Activated B cell treated with CpG ODN at 0.5 μM for 24 hours (primary cell): ENCODE measurements at regions of chr11 and their contacts with region 1.

Region 1: DNA sequence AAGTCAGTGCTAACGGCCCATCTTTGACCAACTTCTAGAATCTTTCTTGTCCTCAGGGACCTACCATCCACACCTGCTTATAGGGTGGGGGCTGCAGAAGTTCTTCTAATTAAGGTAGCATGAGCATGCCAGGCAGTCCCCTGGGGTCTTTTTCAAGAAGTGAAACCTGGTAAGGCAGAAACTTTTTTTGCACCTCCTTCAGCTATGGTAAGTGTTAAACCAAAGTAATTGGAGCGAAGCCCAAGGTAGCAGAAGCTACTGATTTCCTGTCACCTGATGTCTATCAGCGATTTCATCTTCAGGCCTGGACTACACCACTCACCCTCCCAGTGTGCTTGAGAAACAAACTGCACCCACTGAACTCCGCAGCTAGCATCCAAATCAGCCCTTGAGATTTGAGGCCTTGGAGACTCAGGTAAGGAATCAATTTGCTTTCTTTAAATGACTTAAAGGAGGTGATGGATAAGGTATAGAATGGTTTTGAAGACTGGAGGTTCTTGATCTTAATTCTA is at the start of gene MS4A1:
- DNase-seq: peak; percentile 44
- ATAC-seq: peak; percentile 83
- H3K4me3 Mint-ChIP-seq: peak within 1 kb of the TSS; percentile 97
- H3K27ac Mint-ChIP-seq: peak within 1 kb of the TSS; percentile 97
- H3K4me1 Mint-ChIP-seq: peaks cover 54% of the 10 kb centered on the region
- H3K27me3 Mint-ChIP-seq: no peaks in the 10 kb centered on the region
- CTCF ChIP-seq: no peak
- total RNA-seq, gene MS4A1: 1,910 and 2,024 TPM in 2 replicates

Region 2: GRCh38 chr11:60363542-60364510 is 91.8 kb before region 1 on chr11:
- CTCF ChIA-PET with region 1: interaction called, 194 read pairs
- POLR2A ChIA-PET with region 1: interaction called, 800 read pairs
- intact Hi-C with region 1: loop called (anchors 1 kb)
- DNase-seq: peak; percentile 42
- ATAC-seq: peak; percentile 81
- H3K4me3 Mint-ChIP-seq: peak overlapping the region; percentile 83
- H3K27ac Mint-ChIP-seq: peak overlapping the region; percentile 93
- H3K4me1 Mint-ChIP-seq: peaks cover 80% of the 10 kb centered on the region
- H3K27me3 Mint-ChIP-seq: no peaks in the 10 kb centered on the region
- CTCF ChIP-seq: no peak

Region 3: GRCh38 chr11:60396799-60397198 is 58.8 kb before region 1 on chr11:
- CTCF ChIA-PET with region 1: interaction called, 12 read pairs
- POLR2A ChIA-PET with region 1: interaction called, 156 read pairs
- intact Hi-C with region 1: loop called (anchors 1 kb)
- DNase-seq: no peak
- ATAC-seq: peak; percentile 92
- H3K4me3 Mint-ChIP-seq: peak overlapping the region; percentile 71
- H3K27ac Mint-ChIP-seq: peak overlapping the region; percentile 95
- H3K4me1 Mint-ChIP-seq: peaks cover 69% of the 10 kb centered on the region
- H3K27me3 Mint-ChIP-seq: no peaks in the 10 kb centered on the region
- CTCF ChIP-seq: no peak

Region 4: GRCh38 chr11:60477035-60477445 is 21.5 kb after region 1 on chr11:
- CTCF ChIA-PET with region 1: interaction called, 16 read pairs
- POLR2A ChIA-PET with region 1: interaction called, 251 read pairs
- intact Hi-C with region 1: loop called (anchors 1 kb)
- DNase-seq: no peak
- ATAC-seq: peak; percentile 95
- H3K4me3 Mint-ChIP-seq: peak overlapping the region; percentile 64
- H3K27ac Mint-ChIP-seq: peak overlapping the region; percentile 91
- H3K4me1 Mint-ChIP-seq: peaks cover 65% of the 10 kb centered on the region
- H3K27me3 Mint-ChIP-seq: no peaks in the 10 kb centered on the region
- CTCF ChIP-seq: no peak

Region 5: DNA sequence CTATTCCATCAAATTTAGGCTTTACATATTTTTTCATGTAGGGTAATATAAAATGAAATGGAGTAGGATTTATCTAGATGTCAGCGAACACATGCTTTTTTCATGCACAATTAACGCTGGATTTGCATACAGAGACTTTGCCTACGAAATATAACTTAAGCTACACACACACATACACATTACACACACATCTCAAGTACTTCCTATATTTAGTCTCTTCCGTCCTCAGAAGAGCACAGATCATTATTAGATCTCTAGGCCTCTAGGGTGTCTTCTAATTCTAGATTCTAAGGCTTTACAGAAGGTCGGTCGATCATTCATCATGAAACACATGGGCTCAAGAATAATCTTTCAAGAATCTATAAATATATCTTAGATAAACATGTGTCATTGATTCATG is 55.8 kb after region 1 on chr11:
- CTCF ChIA-PET with region 1: no interaction called
- POLR2A ChIA-PET with region 1: no interaction called
- intact Hi-C with region 1: no loop called
- DNase-seq: no peak
- ATAC-seq: no peak
- H3K4me3 Mint-ChIP-seq: no peak overlapping the region
- H3K27ac Mint-ChIP-seq: no peak overlapping the region
- H3K4me1 Mint-ChIP-seq: peaks cover 14% of the 10 kb centered on the region
- H3K27me3 Mint-ChIP-seq: peaks cover 2% of the 10 kb centered on the region
- CTCF ChIP-seq: no peak

Region 6: DNA sequence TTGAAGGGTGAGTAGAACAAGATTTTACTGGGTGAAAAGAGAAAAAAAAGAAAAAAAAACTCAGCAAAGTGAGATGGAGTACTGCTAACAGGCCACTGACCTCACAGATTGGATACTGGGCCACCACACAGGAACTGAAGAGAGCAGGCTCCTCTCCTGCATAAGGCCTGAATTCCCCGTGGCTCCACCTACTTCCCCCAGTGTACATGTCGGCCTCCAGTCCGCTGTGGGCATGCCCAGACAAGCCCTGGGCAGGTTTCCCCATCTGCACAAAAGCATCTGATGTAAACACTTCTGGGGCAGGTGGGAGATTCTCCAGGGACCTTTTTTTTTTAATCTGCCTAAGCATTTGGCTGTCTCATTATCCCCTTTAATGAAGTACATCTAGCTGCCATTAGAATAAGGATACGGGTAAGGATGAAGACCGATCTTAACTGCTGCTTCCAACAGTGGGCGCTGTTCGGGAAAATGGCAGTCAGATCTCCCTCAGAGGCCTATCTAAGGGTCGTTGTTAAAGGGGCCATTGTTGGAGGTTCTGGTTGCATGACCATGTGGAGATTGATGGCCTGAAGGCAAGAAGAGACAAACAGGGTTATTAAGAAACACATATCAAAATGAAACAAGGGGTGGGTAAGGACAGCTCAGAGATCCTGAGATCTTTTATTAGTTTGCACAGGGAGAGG is 108.1 kb after region 1 on chr11:
- CTCF ChIA-PET with region 1: no interaction called
- POLR2A ChIA-PET with region 1: no interaction called
- intact Hi-C with region 1: no loop called
- DNase-seq: no peak
- ATAC-seq: peak; percentile 75
- H3K4me3 Mint-ChIP-seq: no peak overlapping the region
- H3K27ac Mint-ChIP-seq: no peak overlapping the region
- H3K4me1 Mint-ChIP-seq: peaks cover 9% of the 10 kb centered on the region
- H3K27me3 Mint-ChIP-seq: peaks cover 3% of the 10 kb centered on the region
- CTCF ChIP-seq: no peak

Region 7: DNA sequence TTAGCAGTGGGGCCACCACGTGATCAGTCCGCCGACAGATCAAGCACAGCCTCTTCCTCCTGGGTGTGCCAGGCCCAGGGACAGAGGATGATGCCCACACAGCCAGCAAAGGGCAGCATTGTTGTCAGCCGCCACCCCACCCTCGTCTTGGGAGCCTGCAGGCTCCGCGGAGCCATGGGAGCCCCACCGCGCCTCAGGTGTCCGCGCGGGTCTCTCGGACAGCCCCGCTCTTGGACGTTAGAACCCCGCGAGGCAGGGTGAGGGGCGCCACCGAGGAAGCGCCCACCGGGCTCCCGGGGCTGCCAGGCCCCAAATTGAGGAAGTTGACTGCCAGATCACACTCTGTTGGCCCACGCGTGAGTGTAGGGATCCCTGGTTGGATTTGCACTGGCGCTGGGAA is 159.9 kb after region 1 on chr11:
- CTCF ChIA-PET with region 1: interaction called, 3 read pairs
- POLR2A ChIA-PET with region 1: interaction called, 7 read pairs
- intact Hi-C with region 1: loop called (anchors 1 kb)
- DNase-seq: no peak
- ATAC-seq: no peak
- H3K4me3 Mint-ChIP-seq: no peak overlapping the region
- H3K27ac Mint-ChIP-seq: no peak overlapping the region
- H3K4me1 Mint-ChIP-seq: peaks cover 10% of the 10 kb centered on the region
- H3K27me3 Mint-ChIP-seq: peaks cover 9% of the 10 kb centered on the region
- CTCF ChIP-seq: no peak